ENCODE measurements at regions of chr6 and their contacts with region 1.

Region 1: GRCh38 chr6:26457806-26458688 is at the start of gene BTN2A1:
- DNase-seq: peak; percentile 94
- ATAC-seq: peak; percentile 100
- H3K4me3 ChIP-seq: peak within 1 kb of the TSS; percentile 87 to 93 (median 88)
- H3K27ac ChIP-seq: peak within 1 kb of the TSS; percentile 69
- H3K4me1 ChIP-seq: peaks cover 37% of the 10 kb centered on the region
- H3K27me3 ChIP-seq: no peaks in the 10 kb centered on the region; a peak in 1 of 5 replicates
- CTCF ChIP-seq: peak; percentile 57
- EP300 ChIP-seq: no peak
- POLR2A ChIP-seq: peak; percentile 60 to 71
- RAD21 ChIP-seq: 0 out of 2 replicates have a peak, but pooled peaks have one; percentile 11
- total RNA-seq, gene BTN2A1: 9.1 and 16.4 TPM in 2 replicates

Region 2: GRCh38 chr6:26401987-26402658 is 55.9 kb before region 1 on chr6 and contains the start of gene BTN3A1:
- CTCF ChIA-PET with region 1: no interaction called
- POLR2A ChIA-PET with region 1: no interaction called
- in situ Hi-C with region 1: no loop called
- intact Hi-C with region 1: loop called (anchors 5 kb)
- DNase-seq: peak; percentile 81
- ATAC-seq: peak; percentile 94
- H3K4me3 ChIP-seq: peak within 1 kb of the TSS; percentile 63 to 78 (median 75)
- H3K27ac ChIP-seq: peak within 1 kb of the TSS; percentile 75
- H3K4me1 ChIP-seq: peaks cover 48% of the 10 kb centered on the region
- H3K27me3 ChIP-seq: no peaks in the 10 kb centered on the region
- CTCF ChIP-seq: no peak
- EP300 ChIP-seq: no peak
- POLR2A ChIP-seq: peak; percentile 49 to 57; a peak in 3 of 4 replicates
- RAD21 ChIP-seq: no peak
- total RNA-seq, gene BTN3A1: 8.1 and 13.3 TPM in 2 replicates

Region 3: GRCh38 chr6:26473758-26474438 is 15.9 kb after region 1 on chr6:
- CTCF ChIA-PET with region 1: no interaction called
- POLR2A ChIA-PET with region 1: interaction called, 5 read pairs
- in situ Hi-C with region 1: no loop called
- intact Hi-C with region 1: loop called (anchors 1 kb)
- DNase-seq: peak; percentile 90
- ATAC-seq: peak; percentile 92
- H3K4me3 ChIP-seq: peak overlapping the region; percentile 57 to 84 (median 70)
- H3K27ac ChIP-seq: peak overlapping the region; percentile 83
- H3K4me1 ChIP-seq: peaks cover 61% of the 10 kb centered on the region
- H3K27me3 ChIP-seq: no peaks in the 10 kb centered on the region
- CTCF ChIP-seq: no peak
- EP300 ChIP-seq: no peak
- POLR2A ChIP-seq: peak; percentile 62 to 72
- RAD21 ChIP-seq: no peak

Region 4: GRCh38 chr6:26520853-26521599 is 63.0 kb after region 1 on chr6:
- CTCF ChIA-PET with region 1: no interaction called
- POLR2A ChIA-PET with region 1: no interaction called
- in situ Hi-C with region 1: no loop called
- intact Hi-C with region 1: loop called (anchors 5 kb)
- DNase-seq: peak; percentile 82
- ATAC-seq: peak; percentile 88
- H3K4me3 ChIP-seq: peak overlapping the region; percentile 62 to 67 (median 62)
- H3K27ac ChIP-seq: peak overlapping the region; percentile 42
- H3K4me1 ChIP-seq: peaks cover 69% of the 10 kb centered on the region
- H3K27me3 ChIP-seq: no peaks in the 10 kb centered on the region
- CTCF ChIP-seq: 0 out of 2 replicates have a peak, but pooled peaks have one; percentile 5
- EP300 ChIP-seq: peak in 1 of 2 experiments; percentile 28; a peak in 1 of 4 replicates
- POLR2A ChIP-seq: peak; percentile 21 to 70
- RAD21 ChIP-seq: no peak

Measured in HepG2 (cell line).